ENCODE measurements at regions of chr2 and their contacts with region 1.

Region 1: GRCh38 chr2:165401285-165401852 is 68.1 kb upstream of the CSRNP3 start:
- DNase-seq: peak in 1 of 2 experiments; percentile 61
- H3K4me3 ChIP-seq: no peak overlapping the region
- H3K4me3 Mint-ChIP-seq: no peak overlapping the region
- H3K27ac Mint-ChIP-seq: no peak overlapping the region
- H3K4me1 ChIP-seq: 0 out of 2 replicates have a peak, but pooled peaks cover 4% of the 10 kb centered on the region
- H3K4me1 Mint-ChIP-seq: peaks cover 1% of the 10 kb centered on the region
- H3K27me3 ChIP-seq: no peaks in the 10 kb centered on the region
- H3K27me3 Mint-ChIP-seq: no peaks in the 10 kb centered on the region
- CTCF ChIP-seq: peak; percentile 70 to 78

Region 2: DNA sequence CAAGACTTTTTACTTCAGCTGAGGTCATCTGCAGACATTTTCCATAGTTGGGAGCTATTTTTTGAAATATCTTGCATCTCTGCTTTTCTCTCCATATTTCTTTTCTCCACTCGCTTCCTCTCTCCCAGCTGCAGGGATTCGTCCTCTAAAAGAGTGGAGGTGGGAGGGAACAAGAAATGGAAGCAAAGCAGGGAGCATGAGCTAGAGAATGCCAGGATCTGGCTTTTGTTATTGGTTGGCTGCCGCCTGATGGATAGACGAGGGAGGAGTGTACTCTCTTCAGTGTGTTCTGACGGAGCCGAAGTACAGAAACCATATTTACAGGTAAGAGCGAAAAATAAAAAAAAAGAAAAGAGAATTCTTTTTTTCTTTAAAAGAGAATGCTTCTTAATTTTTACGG is 68.0 kb after region 1 on chr2 and contains the start of gene CSRNP3:
- CTCF ChIA-PET with region 1: interaction called, 3 read pairs
- POLR2A ChIA-PET with region 1: no interaction called
- intact Hi-C with region 1: loop called (anchors 1 kb)
- DNase-seq: peak; percentile 71 to 80
- H3K4me3 ChIP-seq: peak within 1 kb of the TSS; percentile 43
- H3K4me3 Mint-ChIP-seq: peak within 1 kb of the TSS; percentile 76
- H3K27ac Mint-ChIP-seq: no peak within 1 kb of the TSS
- H3K4me1 ChIP-seq: no peaks in the 10 kb centered on the region; the same call in 1 of the 2 replicates
- H3K4me1 Mint-ChIP-seq: no peaks in the 10 kb centered on the region
- H3K27me3 ChIP-seq: peaks cover 1% of the 10 kb centered on the region
- H3K27me3 Mint-ChIP-seq: no peaks in the 10 kb centered on the region
- CTCF ChIP-seq: no peak
- total RNA-seq, gene CSRNP3: 1.2 and 1.3 TPM in 2 replicates

Region 3: GRCh38 chr2:165563468-165564225 is 162.3 kb after region 1 on chr2:
- CTCF ChIA-PET with region 1: no interaction called
- POLR2A ChIA-PET with region 1: no interaction called
- intact Hi-C with region 1: loop called (anchors 1 kb)
- DNase-seq: peak in 1 of 2 experiments; percentile 28
- H3K4me3 ChIP-seq: no peak overlapping the region
- H3K4me3 Mint-ChIP-seq: no peak overlapping the region
- H3K27ac Mint-ChIP-seq: no peak overlapping the region
- H3K4me1 ChIP-seq: no peaks in the 10 kb centered on the region
- H3K4me1 Mint-ChIP-seq: peaks cover 6% of the 10 kb centered on the region
- H3K27me3 ChIP-seq: no peaks in the 10 kb centered on the region
- H3K27me3 Mint-ChIP-seq: peaks cover 5% of the 10 kb centered on the region
- CTCF ChIP-seq: peak in 1 of 2 experiments; percentile 71

Region 4: GRCh38 chr2:165778653-165779451 is 377.5 kb after region 1 on chr2:
- CTCF ChIA-PET with region 1: interaction called, 4 read pairs
- POLR2A ChIA-PET with region 1: no interaction called
- intact Hi-C with region 1: loop called (anchors 1 kb)
- DNase-seq: peak in 1 of 2 experiments; percentile 57
- H3K4me3 ChIP-seq: no peak overlapping the region
- H3K4me3 Mint-ChIP-seq: no peak overlapping the region
- H3K27ac Mint-ChIP-seq: no peak overlapping the region
- H3K4me1 ChIP-seq: peaks cover 6% of the 10 kb centered on the region; the same call in 1 of the 2 replicates
- H3K4me1 Mint-ChIP-seq: peaks cover 7% of the 10 kb centered on the region
- H3K27me3 ChIP-seq: no peaks in the 10 kb centered on the region
- H3K27me3 Mint-ChIP-seq: no peaks in the 10 kb centered on the region
- CTCF ChIP-seq: peak; percentile 59 to 65

Region 5: GRCh38 chr2:166784296-166784946 is 1383.1 kb after region 1 on chr2:
- CTCF ChIA-PET with region 1: no interaction called
- POLR2A ChIA-PET with region 1: no interaction called
- intact Hi-C with region 1: no loop called
- DNase-seq: no peak
- H3K4me3 ChIP-seq: no peak overlapping the region
- H3K4me3 Mint-ChIP-seq: no peak overlapping the region
- H3K27ac Mint-ChIP-seq: no peak overlapping the region
- H3K4me1 ChIP-seq: no peaks in the 10 kb centered on the region
- H3K4me1 Mint-ChIP-seq: no peaks in the 10 kb centered on the region
- H3K27me3 ChIP-seq: no peaks in the 10 kb centered on the region
- H3K27me3 Mint-ChIP-seq: no peaks in the 10 kb centered on the region
- CTCF ChIP-seq: no peak

Measured in Caco-2 (cell line).